H1 (cell line): ENCODE measurements at regions of chr3 and their contacts with region 1.

Region 1: GRCh38 chr3:182490596-182491491 is 302.5 kb upstream of the ATP11B start:
- DNase-seq: no peak
- H3K4me3 ChIP-seq: no peak overlapping the region
- H3K27ac ChIP-seq: no peak overlapping the region
- H3K4me1 ChIP-seq: peaks cover 0 to 4% (median 0%) of the 10 kb centered on the region in 4 experiments; a peak in 2 of 7 replicates
- H3K27me3 ChIP-seq: no peaks in the 10 kb centered on the region
- CTCF ChIP-seq: peak in 2 of 3 experiments; percentile 50 to 52; a peak in 3 of 4 replicates
- EP300 ChIP-seq: no peak
- POLR2A ChIP-seq: no peak
- RAD21 ChIP-seq: peak; percentile 48 to 62

Region 2: DNA sequence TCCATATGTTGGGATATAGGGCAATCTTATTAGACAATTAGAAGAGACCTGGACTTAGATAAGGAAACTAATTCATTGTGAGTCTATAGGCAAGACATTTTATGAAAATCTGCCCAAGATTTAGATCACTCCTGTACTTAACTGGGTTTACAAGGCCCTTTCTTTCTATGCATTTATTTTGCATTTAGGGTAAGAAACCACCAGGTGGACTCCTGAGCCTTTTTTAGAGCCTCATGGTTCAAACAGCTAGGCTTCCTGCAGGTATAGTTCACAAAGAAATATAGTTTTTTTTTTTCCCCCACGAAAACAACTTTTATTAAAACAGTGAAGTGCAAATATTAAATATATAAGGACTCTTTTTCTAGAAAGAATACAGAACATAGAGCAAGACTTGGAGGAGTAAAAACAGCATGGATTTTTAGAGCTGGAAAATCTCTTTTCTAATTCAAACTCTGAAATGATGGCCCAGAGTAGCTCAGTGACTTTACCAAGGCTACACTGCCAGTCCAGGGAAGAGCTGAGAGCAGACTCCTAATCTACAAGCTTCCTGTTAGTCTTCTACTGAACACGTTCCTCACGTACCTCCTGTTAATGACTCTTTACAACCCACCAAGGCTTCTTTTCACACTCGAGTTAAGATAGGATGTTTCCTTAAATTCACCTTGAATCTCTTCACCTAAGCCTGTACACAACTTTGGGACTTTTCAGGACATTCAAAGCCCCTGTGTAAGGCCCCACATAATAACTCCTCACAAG is 98.5 kb before region 1 on chr3:
- CTCF ChIA-PET with region 1: interaction called, 12 read pairs
- POLR2A ChIA-PET with region 1: no interaction called
- DNase-seq: no peak
- H3K4me3 ChIP-seq: no peak overlapping the region; a peak in 1 of 8 replicates
- H3K27ac ChIP-seq: no peak overlapping the region
- H3K4me1 ChIP-seq: peaks cover 0 to 5% (median under 1%) of the 10 kb centered on the region in 4 experiments; a peak in 1 of 7 replicates
- H3K27me3 ChIP-seq: peaks cover 0 to 1% (median 0%) of the 10 kb centered on the region in 4 experiments; a peak in 2 of 7 replicates
- CTCF ChIP-seq: peak in 2 of 3 experiments; percentile 46 to 50; a peak in 3 of 4 replicates
- EP300 ChIP-seq: no peak
- POLR2A ChIP-seq: no peak
- RAD21 ChIP-seq: peak; percentile 72 to 83

Region 3: GRCh38 chr3:182544542-182544941 is 53.7 kb after region 1 on chr3:
- CTCF ChIA-PET with region 1: no interaction called
- POLR2A ChIA-PET with region 1: no interaction called
- DNase-seq: no peak
- H3K4me3 ChIP-seq: no peak overlapping the region
- H3K27ac ChIP-seq: no peak overlapping the region
- H3K4me1 ChIP-seq: no peaks in the 10 kb centered on the region
- H3K27me3 ChIP-seq: no peaks in the 10 kb centered on the region
- CTCF ChIP-seq: no peak
- EP300 ChIP-seq: no peak
- POLR2A ChIP-seq: no peak
- RAD21 ChIP-seq: no peak